Right lobe of liver (tissue), 6 donors: ENCODE measurements at regions of chr11 and their contacts with region 1.

Region 1: GRCh38 chr11:62787005-62787759 is at the start of gene TMEM179B:
- DNase-seq: peak; percentile 97 to 99 (median 98)
- ATAC-seq: peak; percentile 82 to 91 (median 86)
- H3K4me3 ChIP-seq: peak within 1 kb of the TSS; percentile 97 to 99 (median 98)
- H3K27ac ChIP-seq: peak within 1 kb of the TSS; percentile 86 to 97 (median 91)
- H3K4me1 ChIP-seq: peaks cover 0 to 32% (median 9%) of the 10 kb centered on the region in 4 donors
- H3K27me3 ChIP-seq: no peaks in the 10 kb centered on the region
- CTCF ChIP-seq: peak in 3 of 4 donors; percentile 22 to 36 (median 26)
- POLR2A ChIP-seq: peak; percentile 96
- total RNA-seq, gene TMEM179B: 23.9 to 47.6 (median 29.1) TPM

Region 2: DNA sequence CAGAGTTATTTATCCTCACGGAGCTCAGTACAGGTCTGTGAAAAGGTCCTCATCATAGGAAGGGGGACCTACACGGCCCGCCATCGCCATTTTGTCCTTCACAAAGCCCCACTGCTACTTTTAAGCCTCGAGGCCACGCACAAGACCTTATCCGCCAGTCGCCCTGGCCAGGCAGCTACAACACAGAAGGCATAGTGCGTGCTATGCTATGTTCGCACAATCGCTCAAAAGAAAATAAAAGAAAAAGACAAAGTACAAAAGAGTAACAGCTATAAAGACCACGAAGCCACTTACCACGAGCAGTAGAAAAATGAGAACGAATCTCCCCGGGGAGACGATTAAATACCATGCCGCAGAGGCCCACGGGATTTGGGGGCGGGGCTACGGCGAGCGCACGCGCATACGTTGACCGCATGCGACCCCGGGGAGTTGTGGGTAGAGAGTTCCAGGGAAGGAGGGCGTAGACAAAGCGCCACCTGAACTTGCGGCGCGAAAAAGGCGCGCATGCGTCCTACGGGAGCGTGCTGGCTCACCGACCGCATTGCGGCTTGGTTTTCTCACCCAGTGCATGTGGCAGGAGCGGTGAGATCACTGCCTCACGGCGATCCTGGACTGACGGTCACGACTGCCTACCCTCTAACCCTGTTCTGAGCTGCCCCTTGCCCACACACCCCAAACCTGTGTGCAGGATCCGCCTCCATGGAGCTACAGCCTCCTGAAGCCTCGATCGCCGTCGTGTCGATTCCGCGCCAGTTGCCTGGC is 68.6 kb after region 1 on chr11:
- intact Hi-C with region 1: loop called in 1 of 2 experiments (anchors 10 kb)
- DNase-seq: peak; percentile 96 to 97 (median 97)
- ATAC-seq: peak; percentile 98 to 99 (median 98)
- H3K4me3 ChIP-seq: peak overlapping the region; percentile 69 to 80 (median 76)
- H3K27ac ChIP-seq: peak overlapping the region; percentile 28 to 63 (median 48)
- H3K4me1 ChIP-seq: peaks cover 0 to 19% (median 5%) of the 10 kb centered on the region in 4 donors
- H3K27me3 ChIP-seq: no peaks in the 10 kb centered on the region
- CTCF ChIP-seq: no peak
- POLR2A ChIP-seq: peak; percentile 92

Region 3: GRCh38 chr11:62905927-62906531 is 118.8 kb after region 1 on chr11:
- intact Hi-C with region 1: no loop called
- DNase-seq: peak; percentile 72 to 85 (median 83)
- ATAC-seq: peak; percentile 87 to 95 (median 92)
- H3K4me3 ChIP-seq: no peak overlapping the region
- H3K27ac ChIP-seq: no peak overlapping the region
- H3K4me1 ChIP-seq: no peaks in the 10 kb centered on the region
- H3K27me3 ChIP-seq: no peaks in the 10 kb centered on the region
- CTCF ChIP-seq: peak; percentile 96 to 98 (median 98)
- POLR2A ChIP-seq: no peak